GM10248 (cell line): ENCODE measurements at regions of chr10 and their contacts with region 1.

Region 1: DNA sequence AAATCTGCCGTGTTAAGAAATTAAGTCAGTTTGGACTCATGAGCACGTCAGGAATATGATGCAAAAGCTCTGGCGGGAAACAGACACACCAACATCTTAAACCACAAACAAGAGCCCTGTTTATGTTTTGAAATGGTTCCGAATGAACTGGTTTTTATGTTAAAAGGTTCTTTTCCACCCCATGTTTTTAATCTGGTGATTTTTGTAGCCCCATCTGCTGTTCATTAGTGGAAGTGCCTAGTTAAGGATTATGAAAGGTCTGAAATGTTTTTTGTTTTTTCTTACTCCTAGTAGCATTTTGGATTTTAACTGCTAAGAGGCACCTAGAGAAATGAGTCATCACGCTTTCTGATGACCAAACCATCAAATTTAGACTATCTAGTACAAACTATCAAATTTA is 404.1 kb upstream of the MKI67 start:
- DNase-seq: no peak
- CTCF ChIP-seq: peak; percentile 37

Region 2: GRCh38 chr10:128268015-128268722 is 262.1 kb before region 1 on chr10:
- CTCF ChIA-PET with region 1: interaction called, 11 read pairs
- POLR2A ChIA-PET with region 1: no interaction called
- DNase-seq: peak; percentile 39
- CTCF ChIP-seq: peak; percentile 48